HCT116 (cell line): ENCODE measurements at regions of chr22 and their contacts with region 1.

Region 1: GRCh38 chr22:50612528-50613221 is 12.1 kb downstream of the MAPK8IP2 start:
- DNase-seq: no peak
- ATAC-seq: peak; percentile 75
- H3K4me3 ChIP-seq: no peak overlapping the region
- H3K27ac ChIP-seq: peak overlapping the region; percentile 62
- H3K4me1 ChIP-seq: peaks cover 19 to 28% of the 10 kb centered on the region in 2 experiments
- H3K27me3 ChIP-seq: no peaks in the 10 kb centered on the region
- CTCF ChIP-seq: no peak
- POLR2A ChIP-seq: no peak
- RAD21 ChIP-seq: no peak

Region 2: GRCh38 chr22:50562523-50563412 is 49.9 kb before region 1 on chr22 and contains the start of gene SYCE3:
- CTCF ChIA-PET with region 1: no interaction called
- POLR2A ChIA-PET with region 1: no interaction called
- RAD21 ChIA-PET with region 1: no interaction called
- intact Hi-C with region 1: no loop called
- DNase-seq: peak; percentile 89
- ATAC-seq: peak; percentile 97
- H3K4me3 ChIP-seq: peak within 1 kb of the TSS; percentile 70
- H3K27ac ChIP-seq: peak within 1 kb of the TSS; percentile 43; the same call in 1 of the 2 replicates
- H3K4me1 ChIP-seq: peaks cover 6 to 11% of the 10 kb centered on the region in 2 experiments; a peak in 2 of 4 replicates
- H3K27me3 ChIP-seq: no peaks in the 10 kb centered on the region
- CTCF ChIP-seq: peak; percentile 52 to 92 (median 79)
- POLR2A ChIP-seq: no peak
- RAD21 ChIP-seq: peak; percentile 59
- total RNA-seq, gene SYCE3: not detected

Region 3: GRCh38 chr22:50582562-50583293 is 29.9 kb before region 1 on chr22 and contains the start of gene CHKB:
- CTCF ChIA-PET with region 1: no interaction called
- POLR2A ChIA-PET with region 1: no interaction called
- RAD21 ChIA-PET with region 1: no interaction called
- intact Hi-C with region 1: loop called (anchors 2 kb)
- DNase-seq: peak; percentile 91
- ATAC-seq: peak; percentile 94
- H3K4me3 ChIP-seq: peak within 1 kb of the TSS; percentile 86 to 90
- H3K27ac ChIP-seq: peak within 1 kb of the TSS; percentile 99
- H3K4me1 ChIP-seq: peaks cover 5 to 28% of the 10 kb centered on the region in 2 experiments
- H3K27me3 ChIP-seq: no peaks in the 10 kb centered on the region
- CTCF ChIP-seq: no peak
- POLR2A ChIP-seq: peak; percentile 90
- RAD21 ChIP-seq: no peak
- total RNA-seq, gene CHKB: 55.1 TPM